WTC11 (cell line): ENCODE measurements at regions of chr5 and their contacts with region 1.

Region 1: DNA sequence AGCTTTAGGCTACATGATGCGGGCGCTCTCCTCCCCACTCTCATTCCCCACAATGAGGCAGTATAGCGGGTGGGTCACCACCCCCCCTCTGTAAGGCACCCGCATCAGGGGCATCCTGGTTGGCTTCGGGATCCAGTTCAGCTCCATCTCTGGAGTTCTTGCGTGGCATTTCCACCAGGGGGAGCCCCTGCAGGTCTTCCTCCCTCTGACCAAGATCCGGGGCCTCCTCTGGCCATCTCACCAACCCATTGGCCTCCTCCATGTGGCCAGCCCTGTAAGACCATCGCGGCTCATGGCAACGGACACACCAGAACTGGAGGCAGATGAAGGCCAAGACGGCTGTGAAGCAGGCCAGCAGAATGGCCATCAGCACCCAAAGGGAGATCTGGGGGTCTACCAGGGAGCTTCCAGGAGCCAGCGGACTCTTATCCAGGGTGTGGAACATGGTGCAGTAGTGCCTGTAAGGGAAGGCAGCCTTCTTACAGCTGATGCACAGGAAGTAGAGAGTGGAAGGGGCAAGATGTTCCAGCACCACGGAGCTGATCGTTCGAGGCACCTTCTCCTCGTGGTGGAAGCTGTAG is 77.0 kb downstream of the CYFIP2 start:
- DNase-seq: peak; percentile 66
- ATAC-seq: peak; percentile 93
- H3K4me3 Mint-ChIP-seq: no peak overlapping the region
- H3K27ac Mint-ChIP-seq: no peak overlapping the region
- H3K4me1 Mint-ChIP-seq: no peaks in the 10 kb centered on the region
- H3K27me3 Mint-ChIP-seq: no peaks in the 10 kb centered on the region
- CTCF ChIP-seq: peak; percentile 55; the same call in 1 of the 2 replicates

Region 2: DNA sequence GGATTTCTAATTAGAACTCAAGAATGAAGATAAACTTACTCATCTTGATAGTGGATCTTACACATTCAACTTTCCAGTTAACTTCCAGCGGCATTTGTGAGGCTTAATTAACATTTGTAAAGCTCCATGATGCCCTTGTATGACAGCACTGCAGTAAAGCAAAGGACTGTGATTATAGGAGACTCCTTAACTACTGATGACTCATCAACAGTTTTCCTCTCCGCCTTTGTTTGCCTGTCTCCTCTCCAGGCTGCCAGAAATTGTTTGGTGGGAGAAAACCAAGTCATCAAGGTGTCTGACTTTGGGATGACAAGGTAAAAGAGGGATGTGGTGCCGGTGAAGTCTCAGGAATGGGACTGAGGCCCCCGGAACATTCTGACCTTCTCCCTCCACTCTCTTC is 97.4 kb before region 1 on chr5:
- CTCF ChIA-PET with region 1: no interaction called
- POLR2A ChIA-PET with region 1: no interaction called
- DNase-seq: no peak
- ATAC-seq: peak; percentile 86
- H3K4me3 Mint-ChIP-seq: no peak overlapping the region
- H3K27ac Mint-ChIP-seq: peak overlapping the region; percentile 63; the same call in 1 of the 2 replicates
- H3K4me1 Mint-ChIP-seq: peaks cover 12% of the 10 kb centered on the region
- H3K27me3 Mint-ChIP-seq: no peaks in the 10 kb centered on the region
- CTCF ChIP-seq: no peak

Region 3: DNA sequence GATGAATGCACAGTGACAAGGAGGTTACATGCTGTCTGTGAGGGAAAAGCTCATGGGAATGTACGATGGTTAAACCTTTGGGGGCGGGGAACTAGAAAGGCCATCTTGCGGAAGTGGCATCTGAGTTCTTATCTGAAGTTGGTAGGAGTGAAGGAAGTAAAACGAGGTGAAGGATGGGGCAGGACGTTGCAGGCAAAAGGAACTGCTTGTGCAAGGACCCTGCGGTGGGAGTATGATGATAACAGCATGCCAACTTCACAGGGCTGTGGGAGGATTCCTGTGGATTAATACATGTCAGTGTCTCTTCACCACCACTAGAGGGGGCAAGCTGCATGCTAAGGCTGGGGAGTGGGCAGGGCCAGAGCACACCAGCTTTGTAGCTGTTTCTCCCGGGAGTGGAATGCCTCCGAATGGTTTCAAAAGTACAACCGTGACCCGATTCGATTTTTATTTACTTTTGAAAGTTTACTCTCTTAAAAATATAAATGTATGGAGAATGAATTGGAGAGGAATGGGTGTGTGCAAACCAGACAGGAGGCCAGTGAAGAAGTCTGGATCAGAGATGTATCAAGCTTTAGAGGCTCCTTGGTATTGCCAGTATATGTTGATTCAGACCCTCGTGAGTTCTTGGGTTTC is 14.5 kb before region 1 on chr5:
- CTCF ChIA-PET with region 1: interaction called, 35 read pairs
- POLR2A ChIA-PET with region 1: no interaction called
- DNase-seq: peak; percentile 45
- ATAC-seq: peak; percentile 98
- H3K4me3 Mint-ChIP-seq: no peak overlapping the region
- H3K27ac Mint-ChIP-seq: no peak overlapping the region
- H3K4me1 Mint-ChIP-seq: no peaks in the 10 kb centered on the region
- H3K27me3 Mint-ChIP-seq: no peaks in the 10 kb centered on the region
- CTCF ChIP-seq: peak; percentile 76

Region 4: DNA sequence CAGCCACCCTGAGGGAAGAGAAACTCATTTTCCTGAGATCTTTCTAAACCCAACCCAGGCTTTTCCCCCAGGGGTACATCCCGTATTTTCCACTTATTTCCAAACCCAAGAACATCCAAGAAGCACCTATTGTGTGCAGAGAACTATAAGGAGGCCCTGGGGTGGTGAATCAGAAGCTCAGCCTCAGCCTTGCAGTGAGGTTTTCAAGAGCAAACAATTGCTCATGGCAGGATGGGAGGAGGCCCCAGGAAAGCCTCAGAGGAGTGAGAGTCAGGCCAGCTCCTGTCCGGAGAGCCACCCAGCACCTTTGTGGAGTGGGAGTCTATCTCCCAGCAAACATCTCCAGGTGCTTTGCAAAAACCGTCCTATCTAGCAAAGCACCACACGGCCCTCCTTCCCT is 136.3 kb after region 1 on chr5:
- CTCF ChIA-PET with region 1: interaction called, 10 read pairs
- POLR2A ChIA-PET with region 1: no interaction called
- DNase-seq: no peak
- ATAC-seq: no peak
- H3K4me3 Mint-ChIP-seq: no peak overlapping the region
- H3K27ac Mint-ChIP-seq: no peak overlapping the region
- H3K4me1 Mint-ChIP-seq: peaks cover 20% of the 10 kb centered on the region
- H3K27me3 Mint-ChIP-seq: no peaks in the 10 kb centered on the region
- CTCF ChIP-seq: no peak

Region 5: GRCh38 chr5:157502143-157502647 is 159.3 kb after region 1 on chr5:
- CTCF ChIA-PET with region 1: no interaction called
- POLR2A ChIA-PET with region 1: no interaction called
- DNase-seq: no peak
- ATAC-seq: no peak
- H3K4me3 Mint-ChIP-seq: no peak overlapping the region
- H3K27ac Mint-ChIP-seq: no peak overlapping the region
- H3K4me1 Mint-ChIP-seq: no peaks in the 10 kb centered on the region
- H3K27me3 Mint-ChIP-seq: no peaks in the 10 kb centered on the region
- CTCF ChIP-seq: no peak